Ascending aorta (tissue), 2 donors: ENCODE measurements at regions of chr1 and their contacts with region 1.

Region 1: GRCh38 chr1:236685917-236686814 is at the start of gene ACTN2:
- DNase-seq: peak in 1 of 2 donors; percentile 79
- H3K4me3 ChIP-seq: peak within 1 kb of the TSS; percentile 76 to 87
- H3K27ac ChIP-seq: peak within 1 kb of the TSS; percentile 85 to 86
- H3K4me1 ChIP-seq: peaks cover 0 to 8% of the 10 kb centered on the region in 2 donors
- H3K27me3 ChIP-seq: no peaks in the 10 kb centered on the region
- CTCF ChIP-seq: no peak
- total RNA-seq, gene ACTN2: 10.5 TPM

Region 2: GRCh38 chr1:236673289-236673919 is 12.8 kb before region 1 on chr1:
- intact Hi-C with region 1: loop called (anchors 2 kb)
- DNase-seq: no peak
- H3K4me3 ChIP-seq: peak overlapping the region; percentile 26 to 34
- H3K27ac ChIP-seq: peak overlapping the region; percentile 65 to 68
- H3K4me1 ChIP-seq: peaks cover 0 to 11% of the 10 kb centered on the region in 2 donors
- H3K27me3 ChIP-seq: no peaks in the 10 kb centered on the region
- CTCF ChIP-seq: no peak

Region 3: GRCh38 chr1:236795035-236795756 is 109.0 kb after region 1 on chr1 and contains the start of gene MTR:
- intact Hi-C with region 1: loop called (anchors 2 kb)
- DNase-seq: peak; percentile 95 to 99
- H3K4me3 ChIP-seq: peak within 1 kb of the TSS; percentile 89 to 96
- H3K27ac ChIP-seq: peak within 1 kb of the TSS; percentile 92 to 97
- H3K4me1 ChIP-seq: peaks cover 0 to 25% of the 10 kb centered on the region in 2 donors
- H3K27me3 ChIP-seq: no peaks in the 10 kb centered on the region
- CTCF ChIP-seq: no peak
- total RNA-seq, gene MTR: 36.1 TPM

Region 4: DNA sequence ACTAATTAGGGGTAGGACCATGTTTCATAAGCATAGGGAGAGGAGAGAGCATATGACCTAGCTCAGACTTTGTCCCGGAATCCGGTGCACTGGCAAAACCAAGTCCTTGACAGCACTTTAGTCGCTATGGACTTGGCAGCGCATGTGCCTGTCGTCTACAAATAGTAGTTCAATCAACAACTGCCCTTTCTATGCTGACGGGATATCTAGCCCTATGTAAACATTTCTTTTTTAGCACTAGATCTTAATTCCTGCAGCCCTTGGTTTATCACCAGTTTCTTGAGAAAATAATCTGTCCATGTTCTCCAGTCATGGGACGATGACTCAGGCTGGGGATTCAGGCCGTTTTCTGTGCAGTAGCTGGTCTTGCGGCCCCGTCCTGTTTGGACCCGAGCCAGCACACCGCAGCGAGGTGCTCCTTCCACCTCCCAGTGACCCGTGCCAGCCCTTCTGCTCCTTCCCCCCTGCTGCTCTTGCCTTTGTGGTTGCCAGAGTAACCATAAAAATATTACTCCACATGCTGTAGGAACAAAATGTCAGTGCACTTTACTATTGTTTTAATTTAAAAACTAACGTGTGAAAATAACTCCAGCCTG is 326.7 kb after region 1 on chr1:
- intact Hi-C with region 1: loop called (anchors 10 kb)
- DNase-seq: peak; percentile 84 to 96
- H3K4me3 ChIP-seq: no peak overlapping the region
- H3K27ac ChIP-seq: peak overlapping the region; percentile 93 to 94
- H3K4me1 ChIP-seq: peaks cover 0 to 21% of the 10 kb centered on the region in 2 donors
- H3K27me3 ChIP-seq: no peaks in the 10 kb centered on the region
- CTCF ChIP-seq: no peak